Activated CD4-positive, alpha-beta memory T cell treated with anti-CD3 and anti-CD28 coated beads for 36 hours (primary cell): ENCODE measurements at regions of chr19 and their contacts with region 1.

Region 1: DNA sequence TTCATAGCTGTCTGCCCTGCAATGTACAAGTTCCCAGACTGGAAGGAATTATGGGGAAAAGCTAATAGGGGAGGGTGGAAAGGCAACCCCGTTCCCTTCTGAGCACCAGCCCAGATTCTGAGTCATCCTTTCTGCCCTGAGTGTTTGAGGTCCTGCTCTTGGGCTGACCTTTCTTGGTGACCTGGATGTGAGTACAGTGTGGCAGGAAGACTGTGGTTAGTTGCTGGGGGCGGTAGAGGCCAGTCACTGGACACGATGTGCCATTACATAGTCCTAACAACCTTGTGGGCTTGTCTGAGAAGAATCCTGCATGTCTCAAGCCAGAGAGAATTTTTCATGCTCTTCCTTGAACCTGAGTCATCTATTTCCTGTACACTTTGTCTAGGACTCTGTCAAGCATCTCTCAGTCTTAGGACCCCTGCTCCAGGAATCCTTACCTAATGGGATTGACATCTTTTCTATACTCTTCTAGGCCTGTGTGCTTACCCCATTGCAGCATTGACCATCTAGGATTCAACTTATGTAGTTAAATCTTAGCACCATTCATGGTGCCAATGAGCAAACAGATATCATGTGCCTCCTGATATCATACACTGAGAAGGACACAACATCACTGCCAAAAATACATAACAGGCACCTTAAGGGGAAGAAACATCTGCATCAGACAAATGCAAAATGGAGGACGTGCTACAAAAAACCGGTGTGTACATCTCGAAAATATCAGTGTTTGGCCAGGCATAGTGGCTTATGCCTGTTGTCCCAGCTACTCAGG is 8.1 kb upstream of the ANGPTL4 start:
- DNase-seq: peak; percentile 19
- H3K4me3 Mint-ChIP-seq: no peak overlapping the region
- H3K27ac Mint-ChIP-seq: no peak overlapping the region
- H3K4me1 Mint-ChIP-seq: peaks cover 8% of the 10 kb centered on the region
- H3K27me3 Mint-ChIP-seq: peaks cover 10% of the 10 kb centered on the region

Region 2: GRCh38 chr19:8334458-8335342 is 21.1 kb before region 1 on chr19:
- CTCF ChIA-PET with region 1: interaction called, 21 read pairs
- POLR2A ChIA-PET with region 1: no interaction called
- intact Hi-C with region 1: no loop called
- DNase-seq: peak; percentile 55
- H3K4me3 Mint-ChIP-seq: no peak overlapping the region
- H3K27ac Mint-ChIP-seq: no peak overlapping the region
- H3K4me1 Mint-ChIP-seq: peaks cover 5% of the 10 kb centered on the region
- H3K27me3 Mint-ChIP-seq: peaks cover 22% of the 10 kb centered on the region

Region 3: DNA sequence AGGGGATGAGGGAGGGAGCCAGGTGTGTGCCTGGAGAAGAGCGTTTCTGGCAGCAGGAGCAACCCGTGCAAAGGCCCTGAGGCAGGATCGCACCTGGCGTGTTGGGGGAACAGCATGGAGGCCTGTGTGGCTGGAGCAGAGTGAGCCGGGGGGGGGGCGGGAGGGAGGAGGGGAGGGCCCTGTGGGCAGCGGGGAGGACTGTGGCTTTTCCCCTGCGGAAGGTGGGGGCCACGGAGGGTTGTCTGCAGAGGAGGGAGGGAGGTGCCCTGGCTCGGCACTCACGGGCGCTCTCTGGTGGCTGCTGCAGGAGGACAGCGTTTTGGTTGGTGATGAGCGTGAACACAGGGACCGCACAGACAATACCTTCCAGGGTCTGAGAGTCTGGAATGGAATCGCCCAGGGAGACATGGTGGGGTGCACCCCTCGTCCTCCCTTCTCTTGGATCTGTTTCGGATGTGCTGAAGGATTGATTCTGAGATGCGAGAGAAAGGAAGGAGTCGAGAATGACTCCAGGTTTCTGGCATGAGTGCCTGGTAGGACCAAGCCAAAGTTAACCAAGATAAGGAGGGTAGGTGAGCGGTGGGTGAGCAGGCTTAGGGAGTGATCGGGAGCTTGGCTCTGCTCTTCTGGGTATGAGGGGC is 40.9 kb after region 1 on chr19:
- CTCF ChIA-PET with region 1: interaction called, 37 read pairs
- POLR2A ChIA-PET with region 1: no interaction called
- intact Hi-C with region 1: loop called (anchors 1 kb)
- DNase-seq: peak; percentile 86
- H3K4me3 Mint-ChIP-seq: no peak overlapping the region
- H3K27ac Mint-ChIP-seq: peak overlapping the region; percentile 20
- H3K4me1 Mint-ChIP-seq: peaks cover 25% of the 10 kb centered on the region
- H3K27me3 Mint-ChIP-seq: no peaks in the 10 kb centered on the region

Region 4: DNA sequence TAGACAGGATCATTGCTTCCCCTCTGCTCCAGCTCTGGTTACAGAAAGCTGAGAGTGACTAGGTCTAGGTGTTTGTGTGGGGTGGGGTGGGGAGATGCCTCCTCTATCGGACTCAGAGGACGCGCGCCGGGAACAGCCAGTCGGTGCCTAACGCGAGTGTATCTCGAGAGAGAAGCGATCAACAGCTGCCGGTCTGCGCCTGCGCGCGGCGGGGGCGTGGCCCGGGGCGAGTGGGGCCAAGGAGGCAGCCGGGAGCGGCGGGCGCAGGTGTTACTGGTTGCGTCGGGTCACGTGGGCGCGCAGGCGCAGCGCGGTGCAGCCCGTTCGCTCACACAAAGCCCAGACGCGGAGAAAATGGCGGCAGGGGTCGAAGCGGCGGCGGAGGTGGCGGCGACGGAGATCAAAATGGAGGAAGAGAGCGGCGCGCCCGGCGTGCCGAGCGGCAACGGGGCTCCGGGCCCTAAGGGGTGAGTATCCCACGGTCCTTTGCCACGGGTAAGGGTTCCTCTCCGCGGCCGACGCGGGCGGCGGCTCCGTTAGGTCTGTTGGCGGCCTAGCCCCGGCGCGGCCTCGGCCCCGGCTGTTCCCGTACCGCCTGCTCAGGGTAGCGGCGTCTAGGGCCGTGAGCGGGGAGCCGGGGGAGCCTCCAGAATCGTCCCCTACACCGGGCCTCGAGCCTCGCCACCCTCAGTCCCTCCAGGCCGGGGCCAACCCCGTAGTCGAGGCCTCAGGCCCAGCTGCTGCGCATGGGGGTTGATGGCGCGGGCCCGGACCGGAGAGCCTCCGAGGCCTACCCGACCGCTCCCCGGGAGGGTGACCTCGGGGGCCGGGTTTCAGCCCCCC is 89.0 kb after region 1 on chr19 and contains the start of gene HNRNPM:
- CTCF ChIA-PET with region 1: interaction called, 11 read pairs
- POLR2A ChIA-PET with region 1: no interaction called
- intact Hi-C with region 1: no loop called
- DNase-seq: peak; percentile 100
- H3K4me3 Mint-ChIP-seq: peak within 1 kb of the TSS; percentile 90
- H3K27ac Mint-ChIP-seq: peak within 1 kb of the TSS; percentile 98
- H3K4me1 Mint-ChIP-seq: peaks cover 36% of the 10 kb centered on the region
- H3K27me3 Mint-ChIP-seq: no peaks in the 10 kb centered on the region
- total RNA-seq, gene HNRNPM: 237 to 238 TPM

Region 5: GRCh38 chr19:8585894-8586750 is 230.3 kb after region 1 on chr19:
- CTCF ChIA-PET with region 1: interaction called, 52 read pairs
- POLR2A ChIA-PET with region 1: no interaction called
- intact Hi-C with region 1: no loop called
- DNase-seq: peak; percentile 75
- H3K4me3 Mint-ChIP-seq: no peak overlapping the region
- H3K27ac Mint-ChIP-seq: no peak overlapping the region
- H3K4me1 Mint-ChIP-seq: no peaks in the 10 kb centered on the region
- H3K27me3 Mint-ChIP-seq: no peaks in the 10 kb centered on the region